HEK293T (cell line): ENCODE measurements at regions of chr15 and their contacts with region 1.

Region 1: DNA sequence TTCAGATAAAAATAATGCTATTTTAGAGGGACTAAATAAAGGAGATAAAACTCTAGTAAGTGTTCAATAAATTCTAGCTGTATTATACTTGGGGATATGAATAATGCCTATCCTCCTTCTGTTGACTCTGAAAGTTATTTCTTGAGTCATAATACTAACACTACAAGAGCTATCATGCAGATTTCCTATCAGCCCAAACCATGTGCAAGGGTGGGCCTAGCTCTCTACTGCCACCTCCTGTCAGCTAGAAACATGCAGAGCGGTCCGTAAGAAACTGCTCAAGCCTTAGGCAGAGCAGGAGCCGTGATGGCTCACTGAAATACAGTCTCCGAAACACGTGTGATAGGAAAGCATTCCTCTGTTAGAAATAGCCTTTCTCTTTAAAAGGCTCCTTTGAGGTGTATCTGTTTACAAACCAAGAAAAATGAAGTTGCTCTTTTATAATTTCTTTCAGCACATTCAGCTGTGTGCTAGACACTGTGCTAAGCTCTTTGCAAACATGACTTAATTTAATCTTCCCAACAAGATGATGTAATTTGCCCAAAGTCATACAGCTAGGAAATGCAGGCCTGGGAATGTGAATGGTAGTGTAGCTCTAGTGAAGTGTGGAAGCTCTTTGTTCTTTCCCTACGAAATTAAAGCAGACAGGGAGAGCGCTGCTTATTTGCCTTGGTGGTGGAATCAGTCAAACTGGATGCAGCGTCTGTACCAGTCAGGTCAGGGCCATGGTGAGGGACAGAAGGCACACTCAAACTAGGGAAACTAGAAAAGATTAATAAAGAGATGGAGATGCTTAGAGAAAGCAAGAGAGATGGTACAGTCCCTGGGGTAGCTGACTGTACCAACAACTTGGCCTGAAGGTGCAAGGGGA is 43.1 kb downstream of the MTHFS start:
- DNase-seq: peak; percentile 75

Region 2: GRCh38 chr15:79863886-79864285 is 10.2 kb after region 1 on chr15:
- CTCF ChIA-PET with region 1: interaction called, 16 read pairs
- POLR2A ChIA-PET with region 1: no interaction called
- DNase-seq: no peak